Activated T-helper 1 cell treated with anti-CD3 and anti-CD28 coated beads, Interleukin-12 subunit alpha, Interleukin-12 subunit beta, Interleukin-2, Interleukin-4 antibody, amounts not matched to agents 30 ng/mL and 10 ng/mL and 1 ng/mL, durations not matched to agents 14 hours and 24 hours and 36 hours (primary cell): ENCODE measurements at regions of chr12 and their contacts with region 1.

Region 1: GRCh38 chr12:117134059-117134458 is 34.8 kb upstream of the TESC start:
- DNase-seq: peak; percentile 59
- H3K4me3 Mint-ChIP-seq: peak overlapping the region; percentile 20
- H3K27ac Mint-ChIP-seq: peak overlapping the region; percentile 87
- H3K4me1 Mint-ChIP-seq: peaks cover 11% of the 10 kb centered on the region
- H3K27me3 Mint-ChIP-seq: peaks cover 5% of the 10 kb centered on the region

Region 2: DNA sequence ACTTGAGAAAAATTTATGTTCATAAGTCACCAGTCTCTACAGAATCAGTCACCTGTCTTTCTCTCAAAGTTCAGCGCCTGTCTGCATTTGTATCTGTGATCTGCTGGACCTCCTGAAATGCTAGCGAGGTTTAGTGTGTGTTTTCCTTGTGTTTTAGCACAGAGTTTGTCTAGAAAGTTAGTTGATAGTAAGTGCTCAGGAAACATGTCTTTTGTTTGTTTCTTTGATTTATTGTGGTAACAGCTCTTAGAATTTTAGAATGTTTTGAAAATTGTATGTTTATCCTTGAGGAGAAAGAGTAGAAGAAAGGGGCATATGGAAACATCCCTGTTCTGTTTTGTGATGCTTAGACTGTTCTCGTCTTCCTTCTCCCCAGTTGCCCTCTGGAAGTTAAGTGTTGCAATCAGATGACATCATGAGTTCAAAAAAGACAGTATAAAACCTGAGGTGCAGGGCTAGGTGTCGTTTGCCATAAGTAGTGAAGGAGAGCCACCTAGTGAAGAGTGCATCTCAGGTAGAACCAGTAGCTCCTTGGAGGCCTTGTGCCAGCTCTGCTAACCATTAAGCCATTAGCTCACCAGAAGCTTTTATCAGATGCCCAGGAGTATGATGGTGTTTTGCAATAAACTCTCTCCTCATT is 178.6 kb before region 1 on chr12:
- intact Hi-C with region 1: loop called (anchors 1 kb)
- DNase-seq: no peak
- H3K4me3 Mint-ChIP-seq: no peak overlapping the region
- H3K27ac Mint-ChIP-seq: no peak overlapping the region
- H3K4me1 Mint-ChIP-seq: peaks cover 32% of the 10 kb centered on the region
- H3K27me3 Mint-ChIP-seq: no peaks in the 10 kb centered on the region

Region 3: DNA sequence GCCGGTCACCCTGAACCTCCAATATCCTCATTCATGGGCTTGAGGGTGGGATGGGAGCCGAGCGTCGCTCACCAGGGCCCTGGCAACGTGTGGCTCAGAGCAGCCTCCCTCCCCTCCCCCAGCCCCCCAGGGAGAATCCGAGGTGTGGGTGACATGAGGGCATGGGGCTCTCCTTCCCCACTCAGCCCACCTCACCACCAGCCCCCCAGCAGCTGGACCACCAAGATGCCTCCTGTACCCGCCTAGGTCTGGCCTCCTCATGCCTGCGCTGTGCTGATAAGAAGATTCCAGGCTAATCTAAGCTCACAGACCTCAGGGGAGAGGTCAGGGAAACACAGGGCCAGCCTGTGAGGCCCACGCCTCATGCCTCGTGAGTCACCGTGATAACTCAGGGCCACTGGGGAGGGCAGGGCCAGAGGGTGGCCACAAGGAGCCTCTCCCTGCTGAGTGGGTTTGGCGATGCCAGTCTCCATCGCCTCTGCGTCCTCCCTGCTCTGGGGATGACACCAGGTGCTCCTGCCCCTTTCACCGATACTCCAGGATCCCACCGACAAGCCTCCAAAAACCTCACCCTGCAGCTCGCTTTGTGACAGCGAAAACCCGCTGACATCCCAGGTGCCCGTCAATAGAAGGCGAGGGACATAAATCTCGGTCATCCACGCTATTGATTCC is 91.8 kb before region 1 on chr12:
- intact Hi-C with region 1: no loop called
- DNase-seq: no peak
- H3K4me3 Mint-ChIP-seq: no peak overlapping the region
- H3K27ac Mint-ChIP-seq: no peak overlapping the region
- H3K4me1 Mint-ChIP-seq: no peaks in the 10 kb centered on the region
- H3K27me3 Mint-ChIP-seq: no peaks in the 10 kb centered on the region

Region 4: DNA sequence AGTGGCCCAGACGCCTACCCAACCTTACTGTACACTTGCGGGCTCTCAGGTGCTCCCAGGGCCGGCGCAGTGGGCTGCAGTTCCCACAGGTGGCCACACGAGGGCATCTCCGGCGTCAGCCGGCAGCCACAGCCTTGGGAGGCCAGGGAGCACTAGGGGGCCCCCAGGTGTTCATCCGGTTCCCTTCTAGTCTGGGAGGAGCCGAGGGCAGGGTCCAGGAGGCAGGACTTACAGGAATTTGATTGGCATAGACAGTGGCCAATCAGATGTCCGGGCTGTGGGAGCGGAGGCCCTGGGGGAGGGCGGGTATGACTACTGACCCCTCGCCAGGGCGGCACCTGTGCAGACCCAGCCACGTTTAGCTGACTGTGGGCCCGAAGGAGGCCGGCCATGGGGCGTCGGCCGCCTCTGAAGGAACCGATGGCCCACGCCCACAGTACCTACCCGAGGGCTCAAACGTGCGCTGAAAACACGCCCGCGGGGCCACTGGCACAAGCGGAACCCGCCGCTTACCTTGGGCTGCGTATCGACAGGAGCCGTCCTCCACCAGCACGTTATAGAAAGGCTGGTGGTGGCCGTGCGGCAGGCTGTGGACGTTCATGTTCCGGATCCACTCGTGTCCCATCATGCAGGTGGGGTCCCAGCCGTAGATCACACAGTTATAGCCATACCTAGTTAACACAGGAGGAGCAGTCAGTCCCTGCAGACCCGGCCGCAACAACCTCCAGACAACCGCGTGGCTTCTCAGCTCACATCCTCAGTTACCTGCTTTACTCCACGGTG is 21.4 kb after region 1 on chr12:
- intact Hi-C with region 1: loop called (anchors 1 kb)
- DNase-seq: peak; percentile 62
- H3K4me3 Mint-ChIP-seq: no peak overlapping the region
- H3K27ac Mint-ChIP-seq: no peak overlapping the region
- H3K4me1 Mint-ChIP-seq: peaks cover 29% of the 10 kb centered on the region
- H3K27me3 Mint-ChIP-seq: no peaks in the 10 kb centered on the region